Naive thymus-derived CD4-positive, alpha-beta T cell (primary cell): ENCODE measurements at regions of chr7 and their contacts with region 1.

Region 1: GRCh38 chr7:2314209-2314955 is at the start of gene SNX8:
- DNase-seq: peak; percentile 91 to 99 (median 94)
- ATAC-seq: peak; percentile 98
- H3K4me3 ChIP-seq: peak within 1 kb of the TSS; percentile 59
- H3K4me3 Mint-ChIP-seq: peak within 1 kb of the TSS in 7 of 10 donors; percentile 87 to 96 (median 93)
- H3K27ac ChIP-seq: peak within 1 kb of the TSS; percentile 60
- H3K27ac Mint-ChIP-seq: peak within 1 kb of the TSS; percentile 62 to 89 (median 88)
- H3K4me1 ChIP-seq: no peaks in the 10 kb centered on the region
- H3K4me1 Mint-ChIP-seq: peaks cover 0 to 19% (median 15%) of the 10 kb centered on the region in 7 donors
- H3K27me3 ChIP-seq: no peaks in the 10 kb centered on the region
- H3K27me3 Mint-ChIP-seq: no peaks in the 10 kb centered on the region
- total RNA-seq, gene SNX8: 4.7 to 31.5 (median 9.4) TPM

Region 2: DNA sequence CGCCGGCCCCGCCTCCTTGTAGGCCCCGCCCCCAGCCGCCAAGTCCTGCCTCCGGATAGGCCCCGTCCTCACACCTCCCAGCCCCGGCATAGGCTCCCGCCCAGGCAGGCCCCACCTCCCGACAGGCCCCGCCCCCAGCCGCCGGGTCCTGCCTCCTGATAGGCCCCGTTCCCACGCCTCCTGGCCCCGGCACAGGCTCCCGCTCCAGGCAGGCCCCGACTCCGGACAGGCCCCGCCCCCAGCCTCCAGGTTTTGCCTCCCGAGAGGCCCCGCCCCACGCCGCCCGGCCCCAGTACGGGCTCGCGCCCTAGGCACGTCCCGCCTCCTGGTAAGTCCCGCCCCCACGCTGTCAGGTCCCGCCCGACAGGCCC is 854.9 kb before region 1 on chr7:
- CTCF ChIA-PET with region 1: no interaction called
- POLR2A ChIA-PET with region 1: no interaction called
- intact Hi-C with region 1: loop called in 1 of 2 experiments (anchors 2 kb)
- DNase-seq: peak; percentile 98 to 99 (median 99)
- ATAC-seq: peak; percentile 97
- H3K4me3 ChIP-seq: peak overlapping the region; percentile 73
- H3K4me3 Mint-ChIP-seq: peak overlapping the region in 8 of 10 donors; percentile 58 to 75 (median 70)
- H3K27ac ChIP-seq: peak overlapping the region; percentile 55
- H3K27ac Mint-ChIP-seq: peak overlapping the region in 1 of 9 donors; percentile 76
- H3K4me1 ChIP-seq: peaks cover 8 to 14% of the 10 kb centered on the region in 2 donors
- H3K4me1 Mint-ChIP-seq: peaks cover 7 to 25% (median 18%) of the 10 kb centered on the region in 7 donors
- H3K27me3 ChIP-seq: no peaks in the 10 kb centered on the region
- H3K27me3 Mint-ChIP-seq: peaks cover 0 to 5% (median 0%) of the 10 kb centered on the region in 5 donors

Region 3: DNA sequence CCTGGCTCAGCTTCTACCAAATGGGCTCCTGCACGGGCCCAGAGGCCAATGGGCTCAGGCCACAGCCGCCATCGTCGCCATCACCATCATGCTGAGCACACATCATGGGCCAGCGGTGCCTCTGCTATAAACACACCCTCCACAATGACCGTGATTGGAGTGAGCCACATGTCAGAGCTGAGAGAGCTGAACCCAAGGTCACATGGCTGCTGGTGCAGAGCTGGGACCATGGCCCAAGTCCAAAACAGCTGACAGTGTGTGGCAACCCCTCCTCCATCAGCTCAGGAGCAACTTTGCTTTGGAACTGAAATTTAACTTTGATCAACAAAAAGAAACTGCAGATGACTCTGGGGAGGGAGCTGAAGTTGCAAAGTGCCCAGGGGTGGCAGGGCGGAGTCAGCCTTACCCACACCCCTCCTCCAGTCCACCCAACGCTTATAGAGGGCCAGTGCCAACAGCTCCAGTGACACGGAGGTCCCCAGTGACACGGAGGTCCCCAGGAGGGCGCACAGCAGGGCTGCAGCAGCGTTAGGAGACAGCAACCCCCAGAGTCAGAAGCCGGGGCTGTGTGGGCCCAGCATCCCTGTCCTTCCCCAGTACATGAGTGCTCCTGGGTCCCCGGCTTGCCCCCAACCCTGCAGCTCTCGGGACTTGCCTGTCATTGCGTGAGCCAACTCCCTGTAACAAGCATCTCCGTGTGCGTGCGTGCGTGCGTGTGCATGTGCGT is 394.7 kb before region 1 on chr7:
- CTCF ChIA-PET with region 1: no interaction called
- POLR2A ChIA-PET with region 1: no interaction called
- intact Hi-C with region 1: loop called in 1 of 2 experiments (anchors 1 kb)
- DNase-seq: peak in 1 of 9 donors; percentile 46
- ATAC-seq: peak; percentile 21
- H3K4me3 ChIP-seq: peak overlapping the region; percentile 47
- H3K4me3 Mint-ChIP-seq: peak overlapping the region; percentile 79 to 97 (median 87)
- H3K27ac ChIP-seq: peak overlapping the region; percentile 47
- H3K27ac Mint-ChIP-seq: peak overlapping the region; percentile 51 to 97 (median 84)
- H3K4me1 ChIP-seq: peaks cover 21 to 69% of the 10 kb centered on the region in 2 donors
- H3K4me1 Mint-ChIP-seq: peaks cover 48 to 83% (median 59%) of the 10 kb centered on the region in 7 donors
- H3K27me3 ChIP-seq: no peaks in the 10 kb centered on the region
- H3K27me3 Mint-ChIP-seq: peaks cover 0 to 15% (median 0%) of the 10 kb centered on the region in 5 donors

Region 4: DNA sequence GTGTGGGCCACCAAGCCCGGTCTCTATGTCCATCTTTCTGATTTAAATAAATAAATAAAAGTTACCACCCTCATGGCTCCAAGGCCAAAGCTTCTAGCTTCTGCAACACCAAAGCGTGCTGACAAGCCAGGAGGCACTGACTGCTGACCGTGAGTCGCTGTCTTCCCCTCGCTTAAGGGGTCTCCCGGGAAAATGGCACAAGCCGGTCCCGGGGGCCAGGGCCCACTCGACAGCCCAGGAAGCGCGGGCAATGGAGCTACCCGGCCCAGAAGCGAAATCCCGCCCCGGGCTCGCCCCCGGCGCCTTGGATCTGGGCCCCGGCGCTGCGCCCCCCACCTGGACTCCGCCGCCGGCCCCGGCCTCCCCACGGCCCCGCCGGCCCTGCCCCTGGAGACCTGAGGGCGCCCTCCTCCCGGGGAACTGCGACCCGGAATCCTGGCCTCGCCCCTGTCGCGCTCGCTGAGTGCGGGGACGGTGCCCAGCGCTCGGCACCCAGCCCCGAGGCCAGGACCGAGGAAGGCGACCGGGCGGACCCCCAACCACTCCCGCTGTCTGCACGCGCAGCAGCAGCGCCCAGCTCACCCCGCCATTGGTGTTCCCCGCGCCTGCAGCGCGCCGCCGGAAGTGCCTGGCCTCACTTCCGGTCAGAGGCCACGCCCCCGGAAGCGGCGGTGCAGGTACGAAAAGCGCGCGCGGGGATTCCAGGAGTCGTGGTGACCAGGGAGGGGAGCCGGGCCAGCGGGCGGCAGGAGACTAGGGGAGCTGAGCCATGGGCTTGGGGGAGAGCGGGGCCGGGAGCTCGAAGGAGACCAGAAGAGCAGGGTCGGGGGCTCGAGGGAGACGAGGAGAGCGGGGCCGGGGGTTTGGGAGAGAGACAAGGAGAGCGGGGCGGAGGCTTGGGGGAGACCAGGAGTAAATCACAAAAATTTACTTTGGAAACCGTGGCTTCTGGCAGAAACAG is 72.5 kb before region 1 on chr7 and contains the starts of genes MRM2 and NUDT1:
- CTCF ChIA-PET with region 1: no interaction called
- POLR2A ChIA-PET with region 1: no interaction called
- intact Hi-C with region 1: loop called in 1 of 2 experiments (anchors 1 kb)
- DNase-seq: peak; percentile 36 to 89 (median 53)
- ATAC-seq: peak; percentile 72
- H3K4me3 ChIP-seq: peak within 1 kb of the TSS; percentile 81
- H3K4me3 Mint-ChIP-seq: peak within 1 kb of the TSS; percentile 84 to 98 (median 90)
- H3K27ac ChIP-seq: peak within 1 kb of the TSS; percentile 86
- H3K27ac Mint-ChIP-seq: peak within 1 kb of the TSS; percentile 83 to 98 (median 89)
- H3K4me1 ChIP-seq: peaks cover 0 to 5% of the 10 kb centered on the region in 2 donors
- H3K4me1 Mint-ChIP-seq: peaks cover 6 to 37% (median 19%) of the 10 kb centered on the region in 7 donors
- H3K27me3 ChIP-seq: no peaks in the 10 kb centered on the region
- H3K27me3 Mint-ChIP-seq: no peaks in the 10 kb centered on the region
- total RNA-seq, gene MRM2: 7.1 to 30.7 (median 20.0) TPM
- total RNA-seq, gene NUDT1: 14.0 to 77.7 (median 22.6) TPM

Region 5: DNA sequence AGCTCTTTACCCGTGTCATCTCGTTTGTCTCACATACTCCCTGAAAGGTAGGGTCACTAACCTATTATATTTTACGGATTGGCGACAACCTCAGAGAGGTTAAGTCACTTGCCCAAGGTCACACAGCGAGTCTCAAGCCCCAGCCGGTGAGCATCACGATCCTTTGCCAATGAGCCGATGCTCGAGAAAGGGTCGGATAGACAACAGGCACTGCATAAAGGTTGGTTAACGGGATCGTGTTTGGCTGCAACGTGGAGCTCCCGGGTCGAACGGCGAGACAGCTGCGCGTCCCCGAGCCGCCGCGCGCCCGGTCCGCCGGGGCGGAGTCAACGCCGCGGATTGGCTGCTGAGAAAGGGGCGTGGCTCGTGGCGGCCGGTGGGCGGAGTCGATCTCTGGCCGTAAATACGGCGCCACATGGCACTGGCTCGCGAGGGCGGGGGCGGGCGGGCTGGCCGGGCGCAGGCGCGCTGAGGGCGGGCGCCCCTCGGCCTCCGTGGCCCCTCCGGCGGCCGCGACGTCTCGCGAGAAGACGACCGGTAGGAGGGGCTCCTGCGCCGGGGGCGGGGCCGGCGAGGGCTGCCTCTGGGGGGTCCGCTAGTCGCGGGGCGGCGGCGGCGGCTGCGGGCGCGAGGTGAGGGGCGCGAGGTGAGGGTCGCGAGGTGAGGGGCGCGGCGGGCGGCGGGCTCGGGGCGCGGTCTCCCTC is 88.8 kb after region 1 on chr7 and contains the start of gene CHST12:
- CTCF ChIA-PET with region 1: no interaction called
- POLR2A ChIA-PET with region 1: no interaction called
- intact Hi-C with region 1: loop called (anchors 1 kb)
- DNase-seq: peak; percentile 91 to 96 (median 93)
- ATAC-seq: peak; percentile 94
- H3K4me3 ChIP-seq: peak within 1 kb of the TSS; percentile 81
- H3K4me3 Mint-ChIP-seq: peak within 1 kb of the TSS; percentile 80 to 94 (median 89)
- H3K27ac ChIP-seq: peak within 1 kb of the TSS; percentile 70
- H3K27ac Mint-ChIP-seq: peak within 1 kb of the TSS; percentile 60 to 96 (median 84)
- H3K4me1 ChIP-seq: peaks cover 23 to 28% of the 10 kb centered on the region in 2 donors
- H3K4me1 Mint-ChIP-seq: peaks cover 38 to 54% (median 49%) of the 10 kb centered on the region in 7 donors
- H3K27me3 ChIP-seq: no peaks in the 10 kb centered on the region
- H3K27me3 Mint-ChIP-seq: peaks cover 0 to 2% (median 0%) of the 10 kb centered on the region in 5 donors
- total RNA-seq, gene CHST12: 13.3 to 41.6 (median 24.3) TPM

Region 6: GRCh38 chr7:2632733-2633537 is 318.6 kb after region 1 on chr7:
- CTCF ChIA-PET with region 1: no interaction called
- POLR2A ChIA-PET with region 1: no interaction called
- intact Hi-C with region 1: loop called (anchors 1 to 5 kb)
- DNase-seq: peak in 8 of 9 donors; percentile 24 to 73 (median 37)
- ATAC-seq: no peak
- H3K4me3 ChIP-seq: peak overlapping the region; percentile 58
- H3K4me3 Mint-ChIP-seq: peak overlapping the region; percentile 86 to 96 (median 89)
- H3K27ac ChIP-seq: peak overlapping the region; percentile 79
- H3K27ac Mint-ChIP-seq: peak overlapping the region in 8 of 9 donors; percentile 72 to 88 (median 81)
- H3K4me1 ChIP-seq: peaks cover 3 to 16% of the 10 kb centered on the region in 2 donors
- H3K4me1 Mint-ChIP-seq: peaks cover 0 to 19% (median 15%) of the 10 kb centered on the region in 7 donors
- H3K27me3 ChIP-seq: no peaks in the 10 kb centered on the region
- H3K27me3 Mint-ChIP-seq: peaks cover 0 to 4% (median 0%) of the 10 kb centered on the region in 5 donors